ENCODE measurements at regions of chr16 and their contacts with region 1.

Region 1: DNA sequence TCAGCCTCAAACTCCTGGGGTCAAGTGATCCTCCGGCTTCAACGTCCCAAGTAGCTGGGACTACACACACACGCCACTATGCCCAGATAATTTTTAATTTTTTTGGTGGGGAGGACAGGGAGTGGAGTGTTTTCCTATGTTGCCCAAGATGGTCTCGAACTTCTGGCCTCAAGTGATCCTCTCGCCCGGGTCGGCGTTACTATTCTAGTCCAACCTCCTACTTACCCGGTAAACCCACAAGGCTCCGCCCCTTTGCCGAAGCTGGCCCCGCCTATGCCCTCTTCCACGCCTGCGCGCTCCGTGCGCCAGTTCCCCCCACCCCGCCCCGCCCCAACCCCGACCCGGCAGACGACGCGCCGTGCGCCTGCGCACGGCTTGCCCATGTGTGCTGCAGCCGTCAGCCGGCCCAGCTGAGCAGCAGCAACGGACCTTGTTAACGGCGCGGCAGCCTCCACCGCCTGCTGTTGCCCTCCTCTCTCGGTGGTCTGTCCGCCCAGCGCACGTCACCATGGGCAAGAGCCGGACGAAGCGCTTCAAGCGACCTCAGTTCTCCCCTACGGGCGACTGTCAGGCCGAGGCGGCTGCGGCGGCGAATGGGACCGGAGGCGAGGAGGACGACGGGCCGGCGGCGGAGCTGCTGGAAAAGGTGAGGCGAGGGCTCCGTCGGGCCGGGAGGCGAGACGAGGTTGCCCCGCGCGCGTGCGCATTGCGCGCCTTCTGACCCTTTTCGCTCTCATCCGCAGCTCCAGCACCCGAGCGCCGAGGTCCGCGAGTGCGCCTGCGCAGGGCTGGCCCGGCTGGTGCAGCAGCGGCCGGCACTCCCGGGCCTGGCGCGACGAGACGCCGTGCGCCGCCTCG is at the start of gene HEATR3:
- DNase-seq: peak; percentile 65 to 95
- H3K4me3 ChIP-seq: peak within 1 kb of the TSS; percentile 80 to 98
- H3K27ac ChIP-seq: peak within 1 kb of the TSS; percentile 90 to 92
- H3K4me1 ChIP-seq: peaks cover 4 to 20% of the 10 kb centered on the region in 2 donors
- H3K27me3 ChIP-seq: no peaks in the 10 kb centered on the region
- CTCF ChIP-seq: no peak
- total RNA-seq, gene HEATR3: 10.4 TPM

Region 2: DNA sequence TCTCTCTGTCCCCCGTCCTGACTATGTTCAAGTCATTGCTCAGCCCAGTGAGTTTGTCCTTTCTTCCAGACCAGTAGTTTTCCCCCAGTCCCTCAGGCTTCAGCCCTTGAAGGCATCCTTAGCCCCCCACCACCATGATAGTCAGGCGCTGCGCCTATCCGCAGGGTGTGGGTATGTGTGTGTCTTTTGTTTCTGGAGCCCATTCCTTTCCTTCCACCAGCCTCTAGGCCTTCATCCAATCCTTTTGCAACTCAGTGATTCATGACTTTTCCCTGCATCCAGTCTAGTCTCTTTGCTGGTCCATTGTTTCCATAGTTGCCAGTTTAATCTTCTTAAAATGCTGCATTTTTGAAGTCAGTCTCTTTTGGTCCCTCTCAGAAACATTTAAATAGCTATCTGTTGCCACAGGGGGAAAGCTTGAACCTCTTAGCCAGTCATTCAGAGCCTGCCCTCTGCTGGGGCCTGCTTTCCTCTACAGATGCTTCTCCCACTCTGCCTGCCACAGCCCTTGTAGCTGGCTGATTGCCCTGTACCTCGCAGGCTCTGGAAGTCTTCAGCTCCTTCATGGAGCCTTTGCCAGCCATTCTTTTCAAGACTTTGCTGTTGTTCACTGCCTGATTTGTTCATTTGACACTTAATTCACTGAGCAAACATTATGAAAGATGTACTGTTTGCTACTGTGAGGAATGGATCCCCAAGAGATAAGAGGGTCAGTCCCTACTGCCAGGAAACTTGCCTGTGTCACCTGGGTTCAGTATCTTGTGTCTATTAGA is 144.6 kb after region 1 on chr16:
- intact Hi-C with region 1: loop called (anchors 2 kb)
- DNase-seq: peak in 1 of 2 donors; percentile 89
- H3K4me3 ChIP-seq: no peak overlapping the region
- H3K27ac ChIP-seq: peak overlapping the region; percentile 17 to 43
- H3K4me1 ChIP-seq: peaks cover 13 to 44% of the 10 kb centered on the region in 2 donors
- H3K27me3 ChIP-seq: no peaks in the 10 kb centered on the region
- CTCF ChIP-seq: peak; percentile 60 to 78 (median 63)

Region 3: GRCh38 chr16:50335196-50335958 is 269.5 kb after region 1 on chr16:
- intact Hi-C with region 1: loop called (anchors 10 kb)
- DNase-seq: no peak
- H3K4me3 ChIP-seq: no peak overlapping the region
- H3K27ac ChIP-seq: peak overlapping the region; percentile 43 to 55
- H3K4me1 ChIP-seq: peaks cover 0 to 43% of the 10 kb centered on the region in 2 donors
- H3K27me3 ChIP-seq: no peaks in the 10 kb centered on the region
- CTCF ChIP-seq: no peak

Region 4: GRCh38 chr16:50741808-50742575 is 676.1 kb after region 1 on chr16 and contains the start of gene CYLD:
- intact Hi-C with region 1: loop called (anchors 5 kb)
- DNase-seq: peak; percentile 99 to 100
- H3K4me3 ChIP-seq: peak within 1 kb of the TSS; percentile 69 to 93
- H3K27ac ChIP-seq: peak within 1 kb of the TSS; percentile 86
- H3K4me1 ChIP-seq: peaks cover 0 to 12% of the 10 kb centered on the region in 2 donors
- H3K27me3 ChIP-seq: no peaks in the 10 kb centered on the region
- CTCF ChIP-seq: no peak
- total RNA-seq, gene CYLD: 33.2 TPM

Measured in ascending aorta (tissue), 2 donors.